CD14-positive monocyte (primary cell): ENCODE measurements at regions of chr5 and their contacts with region 1.

Region 1: DNA sequence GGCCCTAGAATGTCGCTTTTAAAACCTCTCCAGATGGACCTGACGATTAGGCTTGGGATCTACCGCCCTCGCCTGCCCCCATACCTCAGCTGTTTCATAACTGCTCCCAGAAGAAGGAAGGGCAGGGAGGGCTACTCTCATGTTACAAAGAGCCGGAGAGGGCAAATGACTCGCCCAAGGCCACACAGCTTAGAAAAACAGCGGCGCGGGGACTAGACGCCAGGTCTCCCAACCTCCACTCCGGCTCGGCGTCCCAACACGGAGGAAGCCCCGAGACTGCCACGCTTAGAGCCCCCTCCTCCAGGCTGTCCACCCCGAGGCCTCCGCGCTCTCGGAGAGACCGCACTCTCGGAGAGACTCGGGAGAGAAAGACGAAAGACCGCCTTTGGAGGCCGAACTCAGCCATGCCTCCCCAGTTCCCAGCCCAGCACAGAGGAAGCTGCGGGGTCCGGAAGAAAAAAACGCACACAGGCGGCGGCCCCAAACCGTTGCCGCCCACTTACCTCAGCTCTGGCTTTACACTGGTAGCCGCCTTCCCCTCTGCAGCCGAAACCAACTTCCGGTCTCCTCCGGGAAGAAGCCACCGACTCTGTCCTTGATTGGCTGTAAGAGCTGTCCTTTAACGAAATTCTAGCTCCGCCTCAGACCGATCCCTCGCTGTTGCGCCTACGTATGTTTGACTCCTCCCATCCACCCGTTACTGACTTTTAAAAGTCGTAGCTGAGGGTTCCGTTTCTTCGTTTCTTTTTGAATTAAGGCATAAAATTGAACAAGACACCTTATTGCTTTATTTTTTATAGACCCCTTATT is at the start of gene MED7:
- DNase-seq: peak; percentile 98 to 99 (median 98)
- H3K4me3 ChIP-seq: peak within 1 kb of the TSS; percentile 87 to 94 (median 89)
- H3K4me3 Mint-ChIP-seq: peak within 1 kb of the TSS; percentile 94 to 99
- H3K27ac ChIP-seq: peak within 1 kb of the TSS; percentile 94 to 99
- H3K27ac Mint-ChIP-seq: peak within 1 kb of the TSS; percentile 96 to 100 (median 98)
- H3K4me1 ChIP-seq: peaks cover 14 to 21% of the 10 kb centered on the region in 2 donors
- H3K4me1 Mint-ChIP-seq: peaks cover 26% of the 10 kb centered on the region
- H3K27me3 ChIP-seq: no peaks in the 10 kb centered on the region
- H3K27me3 Mint-ChIP-seq: peaks cover 0 to 3% (median 0%) of the 10 kb centered on the region in 3 donors
- CTCF ChIP-seq: no peak
- polyA plus RNA-seq, gene MED7: 5.9 to 13.0 (median 11.9) TPM

Region 2: GRCh38 chr5:157100140-157100679 is 42.3 kb before region 1 on chr5:
- intact Hi-C with region 1: loop called in 1 of 2 experiments (anchors 1 kb)
- DNase-seq: peak; percentile 86 to 94 (median 94)
- H3K4me3 ChIP-seq: no peak overlapping the region
- H3K4me3 Mint-ChIP-seq: peak overlapping the region in 1 of 2 donors; percentile 54
- H3K27ac ChIP-seq: peak overlapping the region; percentile 63 to 82
- H3K27ac Mint-ChIP-seq: peak overlapping the region; percentile 94 to 99 (median 97)
- H3K4me1 ChIP-seq: peaks cover 40 to 48% of the 10 kb centered on the region in 2 donors
- H3K4me1 Mint-ChIP-seq: peaks cover 45% of the 10 kb centered on the region
- H3K27me3 ChIP-seq: no peaks in the 10 kb centered on the region
- H3K27me3 Mint-ChIP-seq: peaks cover 0 to 2% (median 2%) of the 10 kb centered on the region in 3 donors
- CTCF ChIP-seq: no peak

Region 3: GRCh38 chr5:157214861-157215513 is 72.5 kb after region 1 on chr5:
- intact Hi-C with region 1: no loop called
- DNase-seq: no peak
- H3K4me3 ChIP-seq: no peak overlapping the region
- H3K4me3 Mint-ChIP-seq: no peak overlapping the region
- H3K27ac ChIP-seq: no peak overlapping the region
- H3K27ac Mint-ChIP-seq: no peak overlapping the region
- H3K4me1 ChIP-seq: peaks cover 0 to 3% of the 10 kb centered on the region in 2 donors
- H3K4me1 Mint-ChIP-seq: peaks cover 9% of the 10 kb centered on the region
- H3K27me3 ChIP-seq: no peaks in the 10 kb centered on the region
- H3K27me3 Mint-ChIP-seq: no peaks in the 10 kb centered on the region
- CTCF ChIP-seq: no peak

Region 4: GRCh38 chr5:157253547-157253946 is 111.0 kb after region 1 on chr5:
- intact Hi-C with region 1: loop called in 1 of 2 experiments (anchors 10 kb)
- DNase-seq: peak; percentile 40 to 69 (median 59)
- H3K4me3 ChIP-seq: no peak overlapping the region
- H3K4me3 Mint-ChIP-seq: no peak overlapping the region
- H3K27ac ChIP-seq: no peak overlapping the region
- H3K27ac Mint-ChIP-seq: peak overlapping the region in 1 of 7 donors; percentile 21
- H3K4me1 ChIP-seq: peaks cover 13 to 26% of the 10 kb centered on the region in 2 donors
- H3K4me1 Mint-ChIP-seq: peaks cover 23% of the 10 kb centered on the region
- H3K27me3 ChIP-seq: no peaks in the 10 kb centered on the region
- H3K27me3 Mint-ChIP-seq: peaks cover 0 to 1% (median 0%) of the 10 kb centered on the region in 3 donors
- CTCF ChIP-seq: peak; percentile 99

Region 5: DNA sequence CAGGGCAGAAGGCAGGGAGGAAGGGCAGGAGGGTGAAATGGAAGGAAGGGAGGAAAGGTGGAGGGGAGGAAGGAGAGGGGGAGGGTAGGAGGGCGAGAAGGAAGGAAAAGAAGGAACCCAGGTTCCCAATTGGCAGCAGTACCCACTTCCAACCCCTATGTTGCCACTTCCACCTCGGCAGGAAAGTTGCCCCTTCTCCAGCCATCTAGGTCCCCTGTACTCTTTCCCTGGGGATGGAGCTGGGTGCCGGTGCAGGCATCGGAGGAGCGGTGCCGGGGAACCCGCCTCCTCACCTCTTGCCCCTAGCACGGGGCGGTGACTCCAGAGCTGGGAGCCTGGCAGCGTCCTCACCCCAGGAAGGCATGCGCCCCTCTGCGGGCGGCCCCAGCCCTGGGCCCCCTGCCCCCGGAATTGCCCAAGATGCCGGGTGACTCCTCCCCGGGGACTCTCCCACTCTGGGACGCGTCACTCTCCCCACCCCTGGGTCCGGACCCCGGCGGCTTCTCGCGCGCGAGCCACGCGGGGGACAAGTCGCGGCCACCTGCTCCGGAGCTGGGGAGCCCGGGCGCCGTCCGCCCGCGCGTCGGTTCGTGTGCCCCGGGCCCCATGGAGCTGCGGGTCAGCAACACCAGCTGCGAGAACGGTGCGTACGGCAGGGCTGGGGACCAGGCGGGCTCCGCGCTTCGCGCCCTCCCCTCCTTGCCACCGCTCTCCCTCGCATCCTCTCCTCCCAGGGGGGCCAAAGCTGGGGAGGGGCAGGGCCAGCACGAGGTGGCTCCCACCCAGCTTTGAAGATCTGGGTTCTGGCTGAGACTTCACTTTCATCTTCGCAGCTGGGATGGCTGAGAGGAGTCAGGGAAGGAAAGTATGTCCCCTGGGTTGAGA is 317.4 kb after region 1 on chr5 and contains the start of gene NIPAL4:
- intact Hi-C with region 1: loop called in 1 of 2 experiments (anchors 10 kb)
- DNase-seq: peak; percentile 34 to 85 (median 48)
- H3K4me3 ChIP-seq: peak within 1 kb of the TSS in 2 of 3 experiments; percentile 30 to 62
- H3K4me3 Mint-ChIP-seq: peak within 1 kb of the TSS; percentile 63 to 81
- H3K27ac ChIP-seq: no peak within 1 kb of the TSS
- H3K27ac Mint-ChIP-seq: peak within 1 kb of the TSS in 2 of 7 donors; percentile 8 to 77
- H3K4me1 ChIP-seq: peaks cover 28 to 40% of the 10 kb centered on the region in 2 donors
- H3K4me1 Mint-ChIP-seq: peaks cover 37% of the 10 kb centered on the region
- H3K27me3 ChIP-seq: peaks cover 35 to 43% of the 10 kb centered on the region in 2 donors
- H3K27me3 Mint-ChIP-seq: peaks cover 33 to 42% (median 38%) of the 10 kb centered on the region in 3 donors
- CTCF ChIP-seq: no peak
- polyA plus RNA-seq, gene NIPAL4: 0.04 to 2.3 TPM in 2 of 3 donors, not detected in the other